OCI-LY7 (cell line): ENCODE measurements at regions of chr18 and their contacts with region 1.

Region 1: DNA sequence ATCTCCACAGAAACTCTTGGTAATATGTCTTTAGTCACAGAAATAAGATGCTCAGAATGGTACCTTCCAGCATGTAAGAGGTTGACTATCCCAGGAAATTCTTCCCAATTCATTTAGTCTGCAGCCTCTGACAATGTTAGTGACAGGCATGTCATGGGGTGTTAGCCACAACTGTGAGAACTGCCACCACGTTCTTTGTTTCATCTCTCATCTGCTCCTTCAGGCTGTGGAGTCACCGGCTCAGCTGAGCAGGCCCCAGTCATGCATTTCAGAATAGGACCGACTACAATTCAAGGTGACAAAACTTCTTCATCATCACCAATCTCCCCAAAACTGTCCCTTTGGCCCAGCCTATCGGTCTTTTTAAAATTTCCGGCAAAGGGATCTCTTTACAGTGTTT is 167.5 kb downstream of the AKAIN1 start:
- DNase-seq: no peak
- H3K4me3 ChIP-seq: no peak overlapping the region
- H3K27ac ChIP-seq: no peak overlapping the region
- H3K4me1 ChIP-seq: no peaks in the 10 kb centered on the region
- CTCF ChIP-seq: no peak

Region 2: DNA sequence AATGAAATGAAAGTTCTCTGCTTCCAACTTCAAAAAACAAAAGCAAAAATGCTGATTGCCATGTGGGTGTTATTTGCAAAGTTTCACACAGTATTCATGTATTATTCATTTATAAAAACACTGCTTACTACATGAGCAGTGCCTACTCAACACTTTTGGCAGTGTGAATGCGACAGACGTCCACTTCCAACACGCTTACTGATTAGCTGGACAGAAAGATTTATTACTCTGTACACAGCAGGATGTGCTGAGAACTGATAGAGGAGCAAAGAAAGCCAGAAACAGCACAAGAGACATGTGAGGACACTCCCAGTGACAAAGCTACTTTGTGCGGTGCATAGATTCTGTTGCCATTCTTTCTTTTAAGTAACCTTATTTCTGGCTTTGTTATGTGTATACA is 833.2 kb before region 1 on chr18:
- CTCF ChIA-PET with region 1: no interaction called
- POLR2A ChIA-PET with region 1: no interaction called
- intact Hi-C with region 1: loop called (anchors 10 kb)
- DNase-seq: no peak
- H3K4me3 ChIP-seq: no peak overlapping the region
- H3K27ac ChIP-seq: no peak overlapping the region
- H3K4me1 ChIP-seq: no peaks in the 10 kb centered on the region
- CTCF ChIP-seq: no peak

Region 3: GRCh38 chr18:4352746-4353551 is 676.6 kb before region 1 on chr18:
- CTCF ChIA-PET with region 1: no interaction called
- POLR2A ChIA-PET with region 1: no interaction called
- intact Hi-C with region 1: loop called (anchors 10 kb)
- DNase-seq: no peak
- H3K4me3 ChIP-seq: no peak overlapping the region
- H3K27ac ChIP-seq: no peak overlapping the region
- H3K4me1 ChIP-seq: no peaks in the 10 kb centered on the region
- CTCF ChIP-seq: no peak

Region 4: DNA sequence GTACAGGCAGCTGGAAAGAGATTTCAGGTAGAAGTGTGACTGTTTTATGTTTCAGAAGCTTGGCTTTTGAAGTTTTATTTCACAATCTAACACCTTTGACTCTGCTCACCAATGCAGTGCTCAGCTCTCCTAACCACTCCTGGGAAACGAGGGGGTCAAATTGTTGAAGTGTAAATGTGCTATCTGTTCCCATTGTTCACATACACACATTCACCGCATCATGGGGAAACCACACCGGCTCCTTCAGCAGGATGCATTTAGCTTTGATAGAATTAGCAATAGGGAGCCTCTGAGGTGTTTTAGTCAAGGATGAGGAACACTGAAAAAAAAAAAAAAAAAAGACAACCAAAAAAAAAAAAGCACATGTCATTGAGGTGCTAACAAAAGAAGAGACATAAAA is 561.1 kb before region 1 on chr18:
- CTCF ChIA-PET with region 1: no interaction called
- POLR2A ChIA-PET with region 1: no interaction called
- intact Hi-C with region 1: loop called (anchors 10 kb)
- DNase-seq: no peak
- H3K4me3 ChIP-seq: no peak overlapping the region
- H3K27ac ChIP-seq: no peak overlapping the region
- H3K4me1 ChIP-seq: no peaks in the 10 kb centered on the region
- CTCF ChIP-seq: no peak

Region 5: GRCh38 chr18:4639628-4640310 is 389.8 kb before region 1 on chr18:
- CTCF ChIA-PET with region 1: no interaction called
- POLR2A ChIA-PET with region 1: no interaction called
- intact Hi-C with region 1: loop called (anchors 10 kb)
- DNase-seq: peak; percentile 93
- H3K4me3 ChIP-seq: peak overlapping the region; percentile 48
- H3K27ac ChIP-seq: peak overlapping the region; percentile 93
- H3K4me1 ChIP-seq: peaks cover 83% of the 10 kb centered on the region
- CTCF ChIP-seq: no peak

Region 6: DNA sequence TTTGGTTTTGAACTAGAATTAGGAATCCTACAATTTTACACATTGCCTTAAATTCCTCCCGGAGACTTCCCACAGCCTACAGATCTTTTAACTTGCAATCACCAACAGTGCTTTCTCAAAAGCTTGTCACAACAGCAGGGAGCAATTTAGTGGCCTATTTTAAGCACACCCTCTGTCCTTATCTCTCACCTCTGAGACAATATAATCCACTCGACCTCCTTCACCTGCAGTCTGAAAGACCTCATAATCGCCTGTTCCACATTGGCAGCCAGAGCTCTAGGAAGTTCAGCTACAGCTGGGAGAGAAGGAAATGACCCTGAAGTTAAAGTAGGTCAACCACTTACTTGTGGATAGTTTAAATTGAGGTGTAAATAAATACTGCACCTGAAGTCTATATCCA is 324.8 kb before region 1 on chr18:
- CTCF ChIA-PET with region 1: no interaction called
- POLR2A ChIA-PET with region 1: no interaction called
- intact Hi-C with region 1: no loop called
- DNase-seq: no peak
- H3K4me3 ChIP-seq: no peak overlapping the region
- H3K27ac ChIP-seq: no peak overlapping the region
- H3K4me1 ChIP-seq: no peaks in the 10 kb centered on the region
- CTCF ChIP-seq: no peak

Region 7: GRCh38 chr18:4755848-4756247 is 273.7 kb before region 1 on chr18:
- CTCF ChIA-PET with region 1: no interaction called
- POLR2A ChIA-PET with region 1: no interaction called
- intact Hi-C with region 1: no loop called
- DNase-seq: peak; percentile 37
- H3K4me3 ChIP-seq: no peak overlapping the region
- H3K27ac ChIP-seq: no peak overlapping the region
- H3K4me1 ChIP-seq: peaks cover 11% of the 10 kb centered on the region
- CTCF ChIP-seq: no peak

Region 8: GRCh38 chr18:5073026-5073944 is 43.7 kb after region 1 on chr18:
- CTCF ChIA-PET with region 1: no interaction called
- POLR2A ChIA-PET with region 1: no interaction called
- intact Hi-C with region 1: no loop called
- DNase-seq: peak; percentile 50
- H3K4me3 ChIP-seq: no peak overlapping the region
- H3K27ac ChIP-seq: no peak overlapping the region
- H3K4me1 ChIP-seq: peaks cover 10% of the 10 kb centered on the region
- CTCF ChIP-seq: peak; percentile 83